ENCODE measurements at regions of chr11 and their contacts with region 1.

Region 1: DNA sequence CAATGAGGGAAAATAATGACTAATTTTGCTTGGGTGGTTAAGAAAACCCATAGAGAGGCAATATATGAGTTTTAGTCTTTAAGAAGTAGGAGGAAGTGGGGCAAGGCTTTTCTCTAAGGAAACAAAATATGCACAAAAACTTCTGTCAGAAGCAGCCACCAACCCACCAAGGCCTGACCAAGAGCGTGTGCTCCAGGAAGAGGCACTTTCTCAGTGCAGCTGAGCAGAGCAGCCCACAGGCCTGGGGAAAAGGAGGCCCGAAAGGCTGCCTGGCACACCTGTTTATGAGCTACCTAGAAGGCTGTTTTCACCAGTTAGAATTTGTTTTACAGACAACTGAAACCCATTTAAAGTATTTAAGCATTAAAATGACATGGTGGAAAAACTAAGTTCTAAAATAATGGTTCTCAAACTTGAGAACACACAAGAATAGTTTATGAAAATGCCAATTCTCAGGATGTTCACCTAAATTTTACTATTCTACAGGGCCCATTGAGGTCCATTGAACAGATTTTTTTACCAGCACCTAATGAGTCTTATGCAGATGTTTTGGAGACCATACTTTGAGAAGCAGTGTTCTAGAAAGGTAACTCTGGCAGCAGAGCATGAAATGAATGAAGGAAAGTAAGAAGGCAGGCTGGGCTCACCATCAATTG is 160.5 kb upstream of the DDI1 start:
- ATAC-seq: no peak
- H3K4me3 ChIP-seq: no peak overlapping the region
- H3K27ac ChIP-seq: no peak overlapping the region
- H3K4me1 ChIP-seq: peaks cover 0 to 4% of the 10 kb centered on the region in 2 donors

Region 2: DNA sequence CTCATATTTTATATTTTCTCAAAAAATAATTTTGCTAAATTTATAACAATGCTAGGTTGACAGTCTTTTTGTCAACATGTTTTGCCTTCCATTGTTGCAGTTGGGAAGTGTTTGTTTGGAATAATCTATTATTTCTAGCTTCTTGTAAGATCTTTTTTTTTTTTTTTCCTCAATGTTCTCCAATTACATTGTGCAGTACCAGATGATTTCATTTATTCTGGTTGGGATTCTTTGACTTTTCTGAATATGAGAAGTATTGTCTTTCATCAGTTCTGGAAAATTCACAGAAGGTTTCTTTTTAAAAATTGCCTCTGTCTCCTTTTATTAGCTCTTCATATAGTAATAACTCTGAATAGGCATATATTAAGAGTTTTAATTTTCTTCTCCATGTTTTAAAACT is 521.3 kb before region 1 on chr11:
- in situ Hi-C with region 1: no loop called
- ATAC-seq: no peak
- H3K4me3 ChIP-seq: no peak overlapping the region
- H3K27ac ChIP-seq: no peak overlapping the region
- H3K4me1 ChIP-seq: no peaks in the 10 kb centered on the region

Region 3: DNA sequence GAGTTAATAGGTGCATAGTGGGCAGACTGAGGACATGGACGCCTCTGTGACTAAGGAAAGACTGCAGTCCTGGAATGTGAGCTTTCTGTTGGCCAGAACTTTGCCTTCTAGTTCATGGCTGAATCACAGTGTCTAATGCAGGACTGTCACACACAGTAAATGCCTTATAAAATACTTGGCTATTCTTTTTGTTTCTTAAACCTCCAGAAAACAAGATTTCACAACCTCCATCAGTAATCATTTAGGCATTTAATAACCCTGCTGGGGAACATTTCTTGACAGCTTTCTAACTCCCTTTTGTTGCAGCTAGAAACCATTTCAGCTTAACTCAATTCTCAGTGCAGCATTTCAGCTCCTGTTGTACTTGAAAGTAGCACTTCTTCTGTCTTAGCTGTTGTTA is 175.4 kb before region 1 on chr11:
- in situ Hi-C with region 1: loop called in 1 of 9 experiments (anchors 25 kb)
- ATAC-seq: peak in 6 of 8 experiments; percentile 12 to 48 (median 35)
- H3K4me3 ChIP-seq: no peak overlapping the region
- H3K27ac ChIP-seq: no peak overlapping the region
- H3K4me1 ChIP-seq: peaks cover 0 to 4% of the 10 kb centered on the region in 2 donors

Region 4: GRCh38 chr11:104546501-104546900 is 670.5 kb after region 1 on chr11:
- in situ Hi-C with region 1: no loop called
- ATAC-seq: no peak
- H3K4me3 ChIP-seq: no peak overlapping the region
- H3K27ac ChIP-seq: no peak overlapping the region
- H3K4me1 ChIP-seq: peaks cover 0 to 6% of the 10 kb centered on the region in 2 donors